Activated CD4-positive, alpha-beta memory T cell treated with anti-CD3 and anti-CD28 coated beads for 36 hours (primary cell): ENCODE measurements at regions of chr2 and their contacts with region 1.

Region 1: DNA sequence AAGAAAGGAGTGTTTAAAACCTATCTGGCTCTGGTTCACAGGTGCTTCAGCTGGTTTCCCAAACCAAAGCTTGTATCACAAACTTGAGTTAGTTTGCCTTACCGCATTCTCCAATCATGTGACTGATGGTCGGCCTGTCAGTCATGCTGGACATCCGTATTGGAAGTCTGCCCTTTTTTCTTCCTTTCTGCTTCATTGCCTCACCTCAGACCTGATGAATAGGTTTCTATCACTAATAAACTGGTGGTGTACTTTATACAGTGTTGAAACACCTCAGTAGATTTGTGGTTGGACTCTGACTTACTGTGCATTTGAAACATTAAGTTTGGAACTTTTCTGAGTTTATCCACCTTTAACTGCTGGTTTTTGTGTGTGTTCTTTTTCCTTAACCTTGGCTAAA is 84.1 kb downstream of the R3HDM1 start:
- DNase-seq: no peak
- H3K4me3 Mint-ChIP-seq: no peak overlapping the region
- H3K27ac Mint-ChIP-seq: no peak overlapping the region
- H3K4me1 Mint-ChIP-seq: peaks cover 7% of the 10 kb centered on the region
- H3K27me3 Mint-ChIP-seq: no peaks in the 10 kb centered on the region

Region 2: DNA sequence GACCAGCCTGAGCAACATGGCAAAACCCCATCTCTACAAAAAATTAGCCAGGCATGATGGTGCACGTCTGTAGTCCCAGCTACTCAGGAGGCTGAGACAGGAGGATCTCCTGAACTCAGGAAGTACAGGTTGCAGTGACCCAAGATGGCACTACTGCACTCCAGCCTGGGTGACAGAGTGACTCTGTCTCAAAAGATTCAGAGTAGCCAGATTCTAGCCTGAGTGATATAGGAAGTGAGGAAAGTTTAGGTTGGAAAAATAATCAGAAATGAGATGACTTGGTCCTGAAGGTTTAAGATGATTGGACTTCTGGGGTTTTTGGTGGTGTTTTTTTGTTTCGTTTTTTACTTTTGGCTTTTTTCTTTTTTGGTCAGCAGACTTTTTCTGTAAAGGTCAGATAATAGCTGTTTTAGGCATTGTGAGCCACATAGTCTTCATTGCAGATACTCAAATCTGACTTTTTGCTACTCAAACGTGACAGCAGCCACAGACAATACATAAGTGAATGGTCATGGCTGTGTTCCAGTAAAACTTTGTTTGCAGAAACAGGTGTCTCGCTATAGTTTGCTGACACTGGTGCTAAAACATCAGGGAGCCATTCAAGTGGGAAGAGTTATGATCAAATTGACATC is 22.2 kb after region 1 on chr2:
- CTCF ChIA-PET with region 1: interaction called, 3 read pairs
- POLR2A ChIA-PET with region 1: no interaction called
- intact Hi-C with region 1: loop called (anchors 1 kb)
- DNase-seq: peak; percentile 20
- H3K4me3 Mint-ChIP-seq: no peak overlapping the region
- H3K27ac Mint-ChIP-seq: peak overlapping the region; percentile 24
- H3K4me1 Mint-ChIP-seq: peaks cover 12% of the 10 kb centered on the region
- H3K27me3 Mint-ChIP-seq: no peaks in the 10 kb centered on the region

Region 3: DNA sequence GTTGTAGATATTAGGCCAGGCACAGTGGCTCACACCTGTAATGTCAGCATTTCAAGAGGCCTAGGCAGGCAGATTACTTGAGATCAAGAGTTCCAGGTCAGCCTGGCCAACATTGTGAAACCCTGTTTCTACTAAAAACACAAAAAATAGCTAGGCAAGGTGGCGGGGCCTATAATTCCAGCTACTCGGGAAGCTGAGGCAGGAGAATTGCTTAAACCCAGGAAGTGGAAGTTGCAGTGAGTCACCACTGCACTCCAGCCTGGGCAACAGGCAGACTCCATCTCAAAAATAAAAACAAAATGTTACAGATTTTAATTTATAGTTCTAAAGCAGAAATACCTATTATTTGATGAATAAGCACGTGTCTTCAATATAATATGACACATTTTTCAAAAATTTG is 60.6 kb after region 1 on chr2:
- CTCF ChIA-PET with region 1: no interaction called
- POLR2A ChIA-PET with region 1: no interaction called
- intact Hi-C with region 1: no loop called
- DNase-seq: no peak
- H3K4me3 Mint-ChIP-seq: no peak overlapping the region
- H3K27ac Mint-ChIP-seq: no peak overlapping the region
- H3K4me1 Mint-ChIP-seq: no peaks in the 10 kb centered on the region
- H3K27me3 Mint-ChIP-seq: no peaks in the 10 kb centered on the region